Cardiac septum (tissue), 1 donor: ENCODE measurements at regions of chr3 and their contacts with region 1.

Region 1: DNA sequence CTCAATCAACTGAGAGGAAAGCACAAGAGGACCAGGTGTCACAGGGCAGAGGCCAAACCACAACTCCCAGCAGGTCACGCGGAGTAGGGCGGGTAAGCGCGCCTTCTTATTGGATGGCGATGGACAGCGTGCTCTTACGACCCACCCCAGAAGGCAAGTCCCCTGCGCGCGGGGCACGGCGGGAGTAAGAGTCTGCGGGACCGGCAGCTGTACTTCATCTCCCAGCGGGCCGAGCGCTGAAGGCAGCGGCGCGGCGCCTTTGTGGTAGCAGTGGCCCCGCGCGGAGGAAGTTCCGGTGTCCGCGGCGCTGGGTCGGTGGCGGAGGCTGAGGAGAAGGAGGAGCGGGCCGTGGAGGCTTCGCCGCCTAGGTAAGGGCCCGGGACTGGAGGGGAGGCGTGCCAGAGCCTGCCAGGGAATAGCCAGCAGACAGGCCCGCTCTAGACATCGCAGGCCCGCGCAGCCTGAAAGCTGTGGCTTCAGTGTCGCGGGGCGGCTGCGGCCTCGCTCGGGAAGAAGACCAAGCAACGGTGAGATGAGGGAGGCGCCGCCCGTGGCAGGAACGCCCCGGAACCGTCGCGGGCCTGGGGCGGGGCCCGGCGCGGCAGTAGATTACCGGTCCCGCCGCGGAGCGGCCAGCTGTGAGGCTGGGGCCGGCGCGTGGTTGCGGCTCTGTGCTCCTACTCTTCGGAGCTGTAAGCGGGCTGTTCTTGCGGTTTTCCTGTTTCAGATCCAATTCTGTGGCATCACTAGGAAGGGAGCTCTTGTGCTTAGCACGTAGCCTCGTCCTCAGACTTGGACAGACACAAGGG is at the start of gene RBM6:
- DNase-seq: peak; percentile 99
- total RNA-seq, gene RBM6: 37.9 TPM

Region 2: GRCh38 chr3:49724586-49724985 is 215.5 kb before region 1 on chr3:
- intact Hi-C with region 1: no loop called
- DNase-seq: peak; percentile 71

Region 3: GRCh38 chr3:49867871-49868321 is 72.2 kb before region 1 on chr3:
- intact Hi-C with region 1: no loop called
- DNase-seq: no peak

Region 4: DNA sequence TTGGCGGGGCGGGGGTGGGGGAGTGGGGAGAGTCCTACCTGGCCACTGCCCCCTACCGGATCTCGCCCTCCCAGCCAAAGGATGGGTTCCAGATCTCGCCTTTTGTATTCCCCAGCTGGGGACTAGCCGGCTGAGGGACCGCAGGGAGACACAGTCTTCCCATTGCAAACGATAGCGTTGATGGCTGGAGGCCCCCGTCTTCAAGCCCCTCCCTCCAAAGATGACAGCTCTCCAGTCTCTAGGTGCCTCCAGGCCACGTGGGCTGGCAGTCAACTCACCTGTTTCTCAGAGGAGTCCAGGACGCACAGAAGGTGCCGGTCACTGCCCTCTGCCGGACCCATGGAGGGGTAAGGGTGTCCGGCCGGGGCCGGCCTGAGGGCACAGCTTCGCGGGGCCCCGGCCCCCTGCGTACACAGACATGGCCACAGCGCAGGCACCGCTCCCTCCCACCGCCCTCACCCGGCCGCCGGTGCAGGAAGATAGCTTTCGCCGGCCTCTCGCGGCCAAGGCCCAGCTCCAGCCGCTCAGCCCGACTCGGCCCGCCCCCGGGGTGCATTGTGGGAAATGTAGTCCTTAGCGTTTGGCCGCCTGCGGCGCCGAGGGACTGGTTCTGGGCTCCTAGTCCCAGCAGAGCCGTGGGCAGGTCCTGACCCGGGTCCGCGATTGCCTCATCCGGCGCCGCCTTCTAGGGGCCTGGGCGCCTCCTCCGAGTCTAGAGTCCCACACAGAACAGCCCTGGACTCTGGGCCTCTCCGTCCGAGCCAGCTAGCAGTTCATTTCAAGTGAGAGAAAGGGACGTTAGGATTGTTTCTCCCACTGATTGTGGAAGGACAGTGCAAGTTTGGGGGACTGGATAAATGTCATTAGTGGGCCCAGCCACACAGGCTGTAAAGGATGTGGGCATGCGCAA is 10.5 kb before region 1 on chr3 and contains the start of gene MON1A:
- intact Hi-C with region 1: loop called (anchors 1 kb)
- DNase-seq: peak; percentile 98
- total RNA-seq, gene MON1A: 9.4 TPM

Region 5: GRCh38 chr3:50088725-50089608 is 148.9 kb after region 1 on chr3 and contains the start of gene RBM5:
- intact Hi-C with region 1: loop called (anchors 10 kb)
- DNase-seq: peak; percentile 98
- total RNA-seq, gene RBM5: 85.3 TPM

Region 6: DNA sequence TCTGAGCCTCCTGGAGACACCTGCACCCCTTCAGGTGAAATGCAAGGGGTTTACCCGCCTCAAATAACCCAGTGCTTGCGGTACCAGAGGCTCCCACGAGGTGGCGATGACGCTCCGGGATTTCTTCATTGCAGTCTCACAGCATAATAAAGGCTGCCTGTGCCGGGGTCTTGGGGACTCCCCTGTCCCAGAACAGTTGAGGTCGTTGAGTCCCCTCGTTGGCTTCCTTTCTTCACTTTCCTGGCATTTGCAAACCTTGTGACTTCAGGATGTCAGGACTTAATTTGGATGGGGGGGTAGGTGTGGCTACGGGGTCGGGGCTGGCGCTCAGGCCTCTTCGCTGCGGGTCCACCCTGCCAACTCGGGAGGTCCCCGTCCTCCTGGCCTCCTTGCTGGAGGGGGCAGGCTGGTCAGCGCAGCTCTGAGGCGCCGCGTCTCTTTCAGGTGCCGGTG is 252.7 kb after region 1 on chr3:
- intact Hi-C with region 1: no loop called
- DNase-seq: peak; percentile 85